ENCODE measurements at regions of chr1 and their contacts with region 1.

Region 1: DNA sequence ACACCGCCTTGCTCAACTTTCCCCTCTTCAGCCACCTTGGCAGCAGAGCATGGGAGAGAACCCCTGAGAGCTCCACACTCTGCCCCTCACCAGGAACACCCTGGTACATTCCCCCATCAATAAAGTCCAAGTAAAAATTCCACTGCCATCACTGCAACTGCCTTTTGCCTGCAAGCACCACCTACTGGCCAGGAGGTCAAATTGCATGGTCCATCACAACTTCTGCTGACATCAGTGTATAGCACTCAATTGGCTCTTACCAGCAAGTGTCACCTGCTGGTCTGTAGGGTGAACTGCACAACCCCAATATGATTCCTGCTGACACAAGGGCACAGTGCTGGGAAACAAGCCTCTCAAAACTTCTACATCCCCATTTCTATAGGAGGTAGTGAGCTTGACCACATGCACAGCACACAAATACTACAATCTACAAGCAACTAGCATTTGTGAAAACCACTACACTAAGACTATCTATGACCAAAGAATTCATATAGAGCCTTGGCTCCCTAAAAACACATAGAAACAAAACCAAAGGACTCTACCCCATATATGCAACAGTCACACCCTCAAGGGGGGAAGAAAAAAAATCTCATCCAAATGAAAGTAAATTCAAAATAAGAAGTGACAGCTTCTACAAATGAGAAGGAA is 69.2 kb downstream of the FASLG start:
- DNase-seq: peak; percentile 74
- ATAC-seq: peak; percentile 100
- H3K4me3 Mint-ChIP-seq: no peak overlapping the region
- H3K27ac Mint-ChIP-seq: no peak overlapping the region
- H3K4me1 Mint-ChIP-seq: peaks cover 17% of the 10 kb centered on the region
- H3K27me3 Mint-ChIP-seq: peaks cover 6% of the 10 kb centered on the region
- CTCF ChIP-seq: peak; percentile 97

Region 2: DNA sequence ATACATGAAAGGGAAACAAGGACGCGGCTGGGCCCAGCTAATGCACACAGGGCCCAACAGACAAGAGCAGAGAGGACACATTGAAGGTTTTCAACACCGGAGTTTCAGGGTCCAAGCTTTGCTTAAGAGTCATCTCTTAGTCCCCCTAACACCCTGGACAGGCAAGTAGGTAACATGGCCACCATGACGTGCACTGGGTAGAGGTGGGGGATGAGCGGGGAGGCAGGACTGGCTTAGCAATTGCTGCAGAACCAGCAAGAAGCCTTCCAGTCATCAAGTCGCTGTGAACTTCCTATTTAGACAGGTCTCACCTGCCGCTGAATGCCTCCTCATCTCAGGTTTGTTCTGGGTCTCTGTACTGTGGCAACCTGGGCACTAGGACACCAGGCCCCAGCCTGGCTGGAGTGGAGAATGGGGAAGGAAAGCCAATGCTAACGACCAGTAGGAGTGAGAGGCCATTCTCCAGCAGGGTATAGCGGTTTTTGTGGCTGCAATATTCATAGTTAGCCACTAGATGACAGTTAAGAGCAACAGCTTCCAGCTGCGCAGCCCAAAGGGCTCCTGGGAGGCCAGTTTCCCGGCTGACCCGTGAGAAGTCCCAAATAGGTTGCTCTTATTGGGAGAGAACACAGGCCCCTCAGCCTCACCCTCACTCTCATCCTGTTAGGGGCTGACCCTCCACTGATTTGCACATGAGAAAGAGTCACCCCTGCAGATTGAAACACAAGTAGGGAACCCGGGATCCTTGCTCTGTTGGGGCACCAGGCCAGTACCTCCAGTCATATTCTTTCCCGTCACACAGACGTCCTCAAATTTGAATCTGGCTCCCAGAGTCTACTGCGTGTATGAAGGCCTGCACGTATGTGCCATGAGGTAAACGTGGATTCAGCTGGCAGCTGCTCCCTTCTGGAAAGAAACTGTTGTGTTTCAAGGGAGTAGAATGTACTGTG is 278.2 kb before region 1 on chr1:
- CTCF ChIA-PET with region 1: interaction called, 16 read pairs
- POLR2A ChIA-PET with region 1: no interaction called
- intact Hi-C with region 1: no loop called
- DNase-seq: peak; percentile 35
- ATAC-seq: peak; percentile 82
- H3K4me3 Mint-ChIP-seq: no peak overlapping the region
- H3K27ac Mint-ChIP-seq: no peak overlapping the region
- H3K4me1 Mint-ChIP-seq: peaks cover 22% of the 10 kb centered on the region
- H3K27me3 Mint-ChIP-seq: no peaks in the 10 kb centered on the region
- CTCF ChIP-seq: peak; percentile 87

Region 3: GRCh38 chr1:172588296-172589291 is 139.5 kb before region 1 on chr1:
- CTCF ChIA-PET with region 1: interaction called, 15 read pairs
- POLR2A ChIA-PET with region 1: no interaction called
- intact Hi-C with region 1: no loop called
- DNase-seq: peak; percentile 46
- ATAC-seq: peak; percentile 90
- H3K4me3 Mint-ChIP-seq: no peak overlapping the region
- H3K27ac Mint-ChIP-seq: peak overlapping the region; percentile 86
- H3K4me1 Mint-ChIP-seq: peaks cover 28% of the 10 kb centered on the region
- H3K27me3 Mint-ChIP-seq: no peaks in the 10 kb centered on the region
- CTCF ChIP-seq: no peak

Region 4: GRCh38 chr1:172609528-172609927 is 118.6 kb before region 1 on chr1:
- CTCF ChIA-PET with region 1: interaction called, 122 read pairs
- POLR2A ChIA-PET with region 1: interaction called, 3 read pairs
- intact Hi-C with region 1: no loop called
- DNase-seq: no peak
- ATAC-seq: peak; percentile 73
- H3K4me3 Mint-ChIP-seq: no peak overlapping the region
- H3K27ac Mint-ChIP-seq: no peak overlapping the region
- H3K4me1 Mint-ChIP-seq: peaks cover under 1% of the 10 kb centered on the region
- H3K27me3 Mint-ChIP-seq: no peaks in the 10 kb centered on the region
- CTCF ChIP-seq: peak; percentile 51

Region 5: DNA sequence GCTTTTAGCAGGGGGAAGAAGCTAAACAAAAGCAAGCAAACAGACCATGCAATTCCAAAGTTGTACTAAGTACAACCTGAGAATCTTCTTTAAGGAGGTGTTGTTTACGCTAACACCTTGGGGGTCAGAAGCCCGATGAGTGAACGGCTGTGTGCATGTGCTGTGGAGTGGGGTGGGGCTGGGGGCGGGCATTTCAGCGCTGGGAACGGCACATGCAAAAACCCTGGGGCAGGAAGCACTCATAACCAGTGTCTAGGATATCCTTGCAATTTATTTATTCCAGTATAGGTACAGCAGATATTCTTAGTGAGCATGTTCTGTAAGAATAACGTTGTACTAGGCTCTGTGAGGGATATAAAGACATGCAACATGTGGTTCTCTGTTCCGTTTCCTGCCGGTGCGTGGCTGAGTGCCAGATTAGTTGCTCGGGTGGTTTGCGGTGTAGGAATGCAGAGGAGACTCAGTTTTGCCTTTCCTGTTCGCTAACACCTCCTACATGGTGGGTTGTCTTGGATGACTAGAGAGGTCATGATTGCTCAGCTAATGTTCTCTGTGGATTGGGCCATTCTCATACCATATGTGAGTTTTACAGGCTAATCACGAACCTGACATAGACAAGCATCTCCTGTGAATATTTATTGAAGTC is 65.5 kb before region 1 on chr1:
- CTCF ChIA-PET with region 1: interaction called, 18 read pairs
- POLR2A ChIA-PET with region 1: interaction called, 3 read pairs
- intact Hi-C with region 1: no loop called
- DNase-seq: peak; percentile 96
- ATAC-seq: peak; percentile 75
- H3K4me3 Mint-ChIP-seq: peak overlapping the region; percentile 79
- H3K27ac Mint-ChIP-seq: peak overlapping the region; percentile 85
- H3K4me1 Mint-ChIP-seq: peaks cover 80% of the 10 kb centered on the region
- H3K27me3 Mint-ChIP-seq: peaks cover 8% of the 10 kb centered on the region
- CTCF ChIP-seq: no peak

Region 6: GRCh38 chr1:172686143-172686542 is 41.9 kb before region 1 on chr1:
- CTCF ChIA-PET with region 1: no interaction called
- POLR2A ChIA-PET with region 1: no interaction called
- intact Hi-C with region 1: no loop called
- DNase-seq: no peak
- ATAC-seq: no peak
- H3K4me3 Mint-ChIP-seq: no peak overlapping the region
- H3K27ac Mint-ChIP-seq: no peak overlapping the region
- H3K4me1 Mint-ChIP-seq: peaks cover 3% of the 10 kb centered on the region
- H3K27me3 Mint-ChIP-seq: peaks cover 7% of the 10 kb centered on the region
- CTCF ChIP-seq: no peak

Region 7: DNA sequence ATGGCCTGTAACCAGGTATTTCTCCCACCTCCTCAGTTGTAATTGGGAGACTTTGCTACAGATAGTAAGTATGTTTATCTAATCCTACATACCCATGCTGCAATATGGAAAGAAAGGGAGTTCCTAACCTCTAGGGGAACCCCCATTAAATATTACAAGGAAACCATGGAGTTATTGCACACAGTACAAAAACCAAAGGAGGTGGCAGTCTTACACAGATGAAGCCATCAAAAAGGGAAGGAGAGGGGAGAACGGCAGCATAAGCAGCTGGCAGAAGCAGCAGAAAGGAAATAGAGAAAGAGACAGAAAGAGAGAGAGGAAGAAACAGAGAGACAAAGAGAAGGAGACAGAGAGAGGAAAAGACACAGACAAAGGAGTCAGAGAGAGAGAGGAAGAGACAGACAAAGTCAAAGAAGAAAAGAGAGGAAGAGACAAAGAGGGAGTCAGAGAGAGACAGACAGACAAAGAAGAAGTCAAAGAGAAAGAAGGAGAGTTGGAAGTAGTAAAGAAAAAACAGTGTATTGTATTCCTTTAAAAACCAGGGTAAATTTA is 73.8 kb after region 1 on chr1:
- CTCF ChIA-PET with region 1: no interaction called
- POLR2A ChIA-PET with region 1: no interaction called
- intact Hi-C with region 1: no loop called
- DNase-seq: no peak
- ATAC-seq: no peak
- H3K4me3 Mint-ChIP-seq: no peak overlapping the region
- H3K27ac Mint-ChIP-seq: no peak overlapping the region
- H3K4me1 Mint-ChIP-seq: no peaks in the 10 kb centered on the region
- H3K27me3 Mint-ChIP-seq: no peaks in the 10 kb centered on the region
- CTCF ChIP-seq: no peak